Endothelial cell of umbilical vein (primary cell): ENCODE measurements at regions of chr1 and their contacts with region 1.

Region 1: DNA sequence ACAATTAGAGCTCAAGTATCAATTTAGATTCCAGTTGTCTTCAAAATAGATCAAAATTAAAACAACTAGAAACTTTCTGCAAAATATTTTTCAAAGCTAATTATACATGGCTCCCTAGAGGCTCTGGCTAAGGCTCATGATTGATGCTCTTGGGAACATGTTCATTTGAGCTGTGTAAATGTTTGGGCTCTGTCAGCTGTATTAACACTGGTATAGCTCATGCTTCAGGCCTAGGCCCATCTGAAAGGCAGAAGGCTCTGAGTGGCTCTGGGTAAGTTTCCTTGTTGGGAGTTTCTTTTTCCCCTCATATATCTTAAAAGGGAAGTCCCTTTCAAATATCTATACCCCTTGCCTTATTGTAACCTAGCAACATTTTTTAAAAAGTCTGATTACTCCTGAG is 81.3 kb downstream of the UROD start:
- DNase-seq: no peak
- H3K4me3 ChIP-seq: no peak overlapping the region
- H3K27ac ChIP-seq: no peak overlapping the region
- H3K4me1 ChIP-seq: no peaks in the 10 kb centered on the region
- H3K27me3 ChIP-seq: no peaks in the 10 kb centered on the region
- CTCF ChIP-seq: no peak
- POLR2A ChIP-seq: no peak

Region 2: GRCh38 chr1:45148209-45148825 is 55.0 kb after region 1 on chr1:
- CTCF ChIA-PET with region 1: no interaction called
- POLR2A ChIA-PET with region 1: interaction called, 11 read pairs
- dilution Hi-C with region 1: no loop called
- intact Hi-C with region 1: no loop called
- DNase-seq: no peak
- H3K4me3 ChIP-seq: no peak overlapping the region
- H3K27ac ChIP-seq: no peak overlapping the region
- H3K4me1 ChIP-seq: no peaks in the 10 kb centered on the region
- H3K27me3 ChIP-seq: no peaks in the 10 kb centered on the region
- CTCF ChIP-seq: no peak
- POLR2A ChIP-seq: no peak